AG04449 (cell line): ENCODE measurements at regions of chr11 and their contacts with region 1.

Region 1: GRCh38 chr11:122781378-122782195 is 56.7 kb upstream of the CRTAM start:
- DNase-seq: peak; percentile 71
- H3K4me3 ChIP-seq: no peak overlapping the region
- CTCF ChIP-seq: peak; percentile 92

Region 2: DNA sequence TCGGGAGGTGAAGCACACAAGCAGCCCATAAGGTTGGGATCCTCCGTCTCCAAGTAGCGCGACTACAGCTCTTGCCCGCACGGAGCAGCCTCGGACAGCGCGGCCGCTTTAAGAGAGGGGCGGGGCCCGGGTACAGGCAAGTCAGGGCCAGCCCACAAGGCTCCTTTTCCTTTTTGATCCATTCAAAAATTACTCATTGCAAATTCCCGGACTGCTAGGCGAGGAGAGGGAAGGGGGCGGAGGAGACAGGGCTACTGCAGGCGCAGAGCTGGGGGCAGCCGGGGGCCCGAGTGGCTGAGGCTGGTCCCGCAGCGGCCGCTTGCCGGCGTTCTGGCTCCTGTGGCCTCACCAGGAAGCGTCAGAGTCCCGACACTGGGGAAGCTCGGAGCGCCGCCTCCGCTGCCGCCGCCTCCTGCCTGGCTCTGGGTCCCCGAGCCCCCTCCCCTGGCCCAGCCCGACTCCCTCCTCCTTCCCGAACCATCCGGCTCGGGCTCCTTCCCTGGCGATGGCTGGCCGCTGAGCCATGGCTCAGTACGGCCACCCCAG is 126.0 kb before region 1 on chr11 and contains the start of gene UBASH3B:
- CTCF ChIA-PET with region 1: interaction called, 63 read pairs
- POLR2A ChIA-PET with region 1: interaction called, 8 read pairs
- DNase-seq: no peak
- H3K4me3 ChIP-seq: peak within 1 kb of the TSS; percentile 81
- CTCF ChIP-seq: no peak

Region 3: GRCh38 chr11:122734848-122735496 is 46.6 kb before region 1 on chr11:
- CTCF ChIA-PET with region 1: interaction called, 10 read pairs
- POLR2A ChIA-PET with region 1: no interaction called
- DNase-seq: no peak
- H3K4me3 ChIP-seq: no peak overlapping the region
- CTCF ChIP-seq: no peak

Region 4: GRCh38 chr11:122765487-122766131 is 16.0 kb before region 1 on chr11:
- CTCF ChIA-PET with region 1: interaction called, 67 read pairs
- POLR2A ChIA-PET with region 1: no interaction called
- DNase-seq: no peak
- H3K4me3 ChIP-seq: no peak overlapping the region
- CTCF ChIP-seq: no peak